Activated naive CD4-positive, alpha-beta T cell treated with anti-CD3 and anti-CD28 coated beads for 36 hours (primary cell): ENCODE measurements at regions of chr4 and their contacts with region 1.

Region 1: DNA sequence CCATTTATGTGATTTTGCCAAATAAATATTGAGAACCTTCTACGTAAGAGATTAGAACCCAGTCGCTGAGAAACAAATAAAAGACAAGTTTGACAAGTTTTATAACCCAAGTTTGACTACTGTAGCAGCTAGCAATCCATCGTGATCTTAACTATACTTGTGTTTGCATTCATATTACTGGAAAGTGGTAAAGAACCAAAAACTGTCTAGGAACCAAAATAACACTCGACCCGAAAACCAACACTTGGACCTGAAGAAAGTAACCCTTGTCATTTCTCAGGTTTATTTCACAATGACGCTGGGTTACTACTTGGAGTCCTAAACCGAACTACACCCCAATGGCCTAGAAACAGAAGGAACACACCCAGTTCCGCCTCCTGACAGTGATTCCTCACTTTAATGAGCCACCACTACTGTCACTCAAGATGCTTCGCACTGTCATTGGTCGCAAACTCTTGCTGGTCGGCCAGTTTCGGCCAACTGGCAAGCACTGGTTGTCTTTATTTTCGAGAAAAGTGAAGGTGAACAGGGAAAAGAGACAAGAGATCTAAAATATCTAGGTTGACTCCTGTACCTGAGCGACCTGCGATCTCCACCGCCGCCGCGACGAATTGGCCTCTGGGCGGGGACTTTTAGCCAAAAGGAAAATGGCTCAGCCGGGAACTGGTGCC is 496 bp downstream of the FBXO8 start:
- DNase-seq: peak; percentile 87
- H3K4me3 Mint-ChIP-seq: peak overlapping the region; percentile 98
- H3K27ac Mint-ChIP-seq: peak overlapping the region; percentile 99
- H3K4me1 Mint-ChIP-seq: peaks cover 55% of the 10 kb centered on the region
- H3K27me3 Mint-ChIP-seq: no peaks in the 10 kb centered on the region

Region 2: GRCh38 chr4:173168396-173169177 is 1114.4 kb before region 1 on chr4 and contains the start of gene GALNT7:
- CTCF ChIA-PET with region 1: no interaction called
- intact Hi-C with region 1: loop called (anchors 5 kb)
- DNase-seq: peak; percentile 70
- H3K4me3 Mint-ChIP-seq: peak within 1 kb of the TSS; percentile 94
- H3K27ac Mint-ChIP-seq: peak within 1 kb of the TSS; percentile 83
- H3K4me1 Mint-ChIP-seq: peaks cover 38% of the 10 kb centered on the region
- H3K27me3 Mint-ChIP-seq: no peaks in the 10 kb centered on the region
- total RNA-seq, gene GALNT7: 8.5 to 11.1 TPM

Region 3: DNA sequence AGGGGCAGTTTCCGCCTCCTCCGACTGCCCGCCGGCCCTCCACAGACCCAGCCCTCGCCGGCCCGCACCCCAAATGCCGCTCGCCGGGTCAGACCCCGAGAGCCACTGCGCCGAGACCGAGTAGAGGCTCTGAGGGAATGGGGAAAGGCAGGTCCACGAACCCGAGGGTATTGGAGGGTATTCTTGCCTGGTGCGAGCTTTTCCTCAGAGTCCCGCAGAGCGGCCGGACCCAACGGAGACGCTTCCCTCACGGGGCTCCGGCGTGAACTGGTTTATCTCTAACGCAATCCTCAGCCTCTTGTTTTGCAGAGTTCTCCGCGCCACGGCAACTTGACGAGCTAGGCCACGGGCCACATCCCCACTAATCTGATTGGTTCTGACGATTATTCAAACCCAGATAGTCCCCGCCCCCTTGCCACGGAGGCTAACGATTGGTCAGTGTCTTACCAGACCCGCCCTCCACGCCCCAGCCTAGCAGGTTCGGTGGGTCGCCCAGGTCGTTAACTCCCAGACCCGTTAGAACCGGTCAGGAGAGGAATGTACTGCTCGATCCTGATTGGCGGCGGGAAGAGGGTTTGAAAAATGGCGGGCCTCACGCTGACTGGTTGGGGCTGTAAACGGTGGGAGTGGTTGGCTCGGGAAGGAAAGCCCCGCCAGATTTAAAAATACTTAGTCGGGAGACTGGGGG is 948.7 kb before region 1 on chr4 and contains the start of gene HMGB2:
- CTCF ChIA-PET with region 1: no interaction called
- intact Hi-C with region 1: loop called (anchors 1 kb)
- DNase-seq: peak; percentile 100
- H3K4me3 Mint-ChIP-seq: peak within 1 kb of the TSS; percentile 99
- H3K27ac Mint-ChIP-seq: peak within 1 kb of the TSS; percentile 99
- H3K4me1 Mint-ChIP-seq: peaks cover 15% of the 10 kb centered on the region
- H3K27me3 Mint-ChIP-seq: peaks cover 12% of the 10 kb centered on the region
- total RNA-seq, gene HMGB2: 752 to 787 TPM

Region 4: GRCh38 chr4:174222266-174222872 is 60.6 kb before region 1 on chr4:
- CTCF ChIA-PET with region 1: no interaction called
- intact Hi-C with region 1: loop called (anchors 1 kb)
- DNase-seq: peak; percentile 13
- H3K4me3 Mint-ChIP-seq: no peak overlapping the region
- H3K27ac Mint-ChIP-seq: no peak overlapping the region
- H3K4me1 Mint-ChIP-seq: peaks cover 9% of the 10 kb centered on the region
- H3K27me3 Mint-ChIP-seq: peaks cover 39% of the 10 kb centered on the region

Region 5: DNA sequence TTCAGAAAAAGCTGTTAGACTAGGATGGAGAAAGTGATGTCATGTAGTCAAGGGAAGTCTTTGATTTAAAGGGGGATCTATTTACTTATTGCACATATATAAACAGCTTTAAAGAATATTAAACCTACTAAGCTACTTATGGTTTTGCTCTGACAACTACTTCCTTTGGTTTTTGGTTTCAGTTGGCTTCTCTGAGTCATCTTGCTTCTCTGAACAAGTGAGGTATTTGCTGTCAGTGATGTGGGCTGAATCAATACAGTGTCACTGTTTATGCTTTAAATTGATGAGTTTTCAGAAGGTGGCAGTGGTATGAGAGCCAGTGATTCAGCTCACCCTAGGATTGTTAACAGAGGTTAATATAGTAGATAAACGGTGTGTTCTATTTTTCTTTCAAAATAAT is 75.9 kb after region 1 on chr4:
- CTCF ChIA-PET with region 1: no interaction called
- intact Hi-C with region 1: loop called (anchors 2 kb)
- DNase-seq: peak; percentile 16
- H3K4me3 Mint-ChIP-seq: no peak overlapping the region
- H3K27ac Mint-ChIP-seq: no peak overlapping the region
- H3K4me1 Mint-ChIP-seq: peaks cover 4% of the 10 kb centered on the region
- H3K27me3 Mint-ChIP-seq: peaks cover 28% of the 10 kb centered on the region